ENCODE measurements at regions of chr6 and their contacts with region 1.

Region 1: GRCh38 chr6:143575440-143575839 is 63.9 kb upstream of the FUCA2 start:
- DNase-seq: peak; percentile 12 to 81 (median 46)
- ATAC-seq: peak; percentile 99
- H3K4me3 ChIP-seq: no peak overlapping the region
- H3K4me3 Mint-ChIP-seq: no peak overlapping the region
- H3K27ac ChIP-seq: no peak overlapping the region
- H3K27ac Mint-ChIP-seq: no peak overlapping the region
- H3K4me1 ChIP-seq: no peaks in the 10 kb centered on the region
- H3K4me1 Mint-ChIP-seq: no peaks in the 10 kb centered on the region
- H3K27me3 ChIP-seq: no peaks in the 10 kb centered on the region
- H3K27me3 Mint-ChIP-seq: no peaks in the 10 kb centered on the region
- CTCF ChIP-seq: peak; percentile 93

Region 2: DNA sequence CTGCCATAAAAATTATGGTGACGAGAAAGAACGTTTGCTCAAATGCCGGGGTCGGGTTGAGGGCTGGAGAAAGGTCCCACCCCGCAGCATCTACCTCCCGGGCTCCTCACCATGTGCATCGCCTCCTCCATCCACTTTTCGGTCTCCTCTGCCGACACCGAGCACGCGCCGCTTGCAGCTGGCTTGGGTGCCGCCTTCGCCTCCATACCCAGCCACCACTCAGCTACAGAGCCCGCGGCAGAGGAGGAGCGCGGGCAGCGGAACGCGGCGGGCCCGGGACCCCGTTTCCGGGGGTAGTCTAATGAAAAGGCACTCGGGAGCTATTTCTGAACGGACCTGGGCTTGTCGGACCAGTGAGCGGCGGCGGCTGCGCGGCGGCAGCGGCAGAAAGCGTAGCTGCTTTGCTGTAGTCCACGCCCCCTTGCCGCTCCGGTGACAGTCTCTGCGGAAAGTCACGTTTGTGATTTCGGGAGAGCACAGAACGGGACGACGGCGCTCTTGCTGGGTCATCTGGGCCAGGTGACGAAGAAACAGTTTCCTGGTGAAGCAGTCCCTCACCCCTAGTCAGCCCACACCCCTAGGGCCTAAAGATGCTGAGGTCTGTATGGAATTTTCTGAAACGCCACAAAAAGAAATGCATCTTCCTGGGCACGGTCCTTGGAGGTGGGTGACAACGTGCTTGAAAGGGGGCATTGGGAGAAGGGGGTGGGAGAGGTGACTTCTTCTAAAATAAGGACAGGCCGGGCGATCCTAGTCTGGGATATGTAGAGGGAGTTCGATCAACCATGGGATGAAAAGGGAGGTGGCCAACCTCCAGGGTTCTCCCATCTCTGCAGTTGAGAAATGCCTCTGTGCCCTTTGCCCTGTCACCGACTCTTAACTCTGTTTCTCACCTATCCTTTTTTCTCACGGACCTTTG is 124.7 kb before region 1 on chr6 and contains the starts of genes ADAT2 and PEX3:
- CTCF ChIA-PET with region 1: no interaction called
- POLR2A ChIA-PET with region 1: no interaction called
- intact Hi-C with region 1: no loop called
- DNase-seq: peak; percentile 82 to 95 (median 92)
- ATAC-seq: peak; percentile 90
- H3K4me3 ChIP-seq: peak within 1 kb of the TSS; percentile 64 to 86
- H3K4me3 Mint-ChIP-seq: peak within 1 kb of the TSS; percentile 100
- H3K27ac ChIP-seq: peak within 1 kb of the TSS; percentile 68 to 74
- H3K27ac Mint-ChIP-seq: peak within 1 kb of the TSS; percentile 96
- H3K4me1 ChIP-seq: peaks cover 21% of the 10 kb centered on the region
- H3K4me1 Mint-ChIP-seq: peaks cover 57% of the 10 kb centered on the region
- H3K27me3 ChIP-seq: no peaks in the 10 kb centered on the region
- H3K27me3 Mint-ChIP-seq: no peaks in the 10 kb centered on the region
- CTCF ChIP-seq: no peak
- total RNA-seq, gene ADAT2: 18.8 to 19.9 TPM
- total RNA-seq, gene PEX3: 10.5 to 11.6 TPM

Region 3: GRCh38 chr6:143559051-143559660 is 16.3 kb before region 1 on chr6:
- CTCF ChIA-PET with region 1: interaction called, 10 read pairs
- POLR2A ChIA-PET with region 1: no interaction called
- intact Hi-C with region 1: no loop called
- DNase-seq: no peak
- ATAC-seq: no peak
- H3K4me3 ChIP-seq: no peak overlapping the region
- H3K4me3 Mint-ChIP-seq: no peak overlapping the region
- H3K27ac ChIP-seq: no peak overlapping the region
- H3K27ac Mint-ChIP-seq: no peak overlapping the region
- H3K4me1 ChIP-seq: peaks cover 12% of the 10 kb centered on the region
- H3K4me1 Mint-ChIP-seq: peaks cover 42% of the 10 kb centered on the region
- H3K27me3 ChIP-seq: no peaks in the 10 kb centered on the region
- H3K27me3 Mint-ChIP-seq: no peaks in the 10 kb centered on the region
- CTCF ChIP-seq: no peak

Region 4: DNA sequence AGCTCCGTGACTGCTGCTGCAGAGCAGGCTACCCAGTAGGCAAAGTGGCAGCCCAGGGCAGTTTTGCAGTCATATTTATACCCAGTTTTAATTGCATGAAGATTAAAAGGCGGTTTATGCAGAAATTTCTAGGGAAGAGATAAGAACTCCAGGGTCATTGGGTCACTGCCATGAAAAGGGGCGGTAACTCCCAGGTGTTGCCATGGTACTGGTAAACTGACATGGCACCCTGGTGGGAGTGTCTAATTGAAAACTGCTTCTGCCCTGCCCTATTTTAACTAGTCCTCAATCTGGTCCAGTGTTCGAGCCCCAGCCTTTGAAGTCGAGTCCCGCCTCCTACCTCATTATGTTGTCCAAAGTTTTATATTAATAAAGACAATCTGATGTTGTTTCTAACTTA is 11.1 kb after region 1 on chr6:
- CTCF ChIA-PET with region 1: interaction called, 15 read pairs
- POLR2A ChIA-PET with region 1: interaction called, 4 read pairs
- intact Hi-C with region 1: no loop called
- DNase-seq: no peak
- ATAC-seq: no peak
- H3K4me3 ChIP-seq: no peak overlapping the region
- H3K4me3 Mint-ChIP-seq: no peak overlapping the region
- H3K27ac ChIP-seq: no peak overlapping the region
- H3K27ac Mint-ChIP-seq: no peak overlapping the region
- H3K4me1 ChIP-seq: no peaks in the 10 kb centered on the region
- H3K4me1 Mint-ChIP-seq: peaks cover 4% of the 10 kb centered on the region
- H3K27me3 ChIP-seq: no peaks in the 10 kb centered on the region
- H3K27me3 Mint-ChIP-seq: no peaks in the 10 kb centered on the region
- CTCF ChIP-seq: no peak

Region 5: DNA sequence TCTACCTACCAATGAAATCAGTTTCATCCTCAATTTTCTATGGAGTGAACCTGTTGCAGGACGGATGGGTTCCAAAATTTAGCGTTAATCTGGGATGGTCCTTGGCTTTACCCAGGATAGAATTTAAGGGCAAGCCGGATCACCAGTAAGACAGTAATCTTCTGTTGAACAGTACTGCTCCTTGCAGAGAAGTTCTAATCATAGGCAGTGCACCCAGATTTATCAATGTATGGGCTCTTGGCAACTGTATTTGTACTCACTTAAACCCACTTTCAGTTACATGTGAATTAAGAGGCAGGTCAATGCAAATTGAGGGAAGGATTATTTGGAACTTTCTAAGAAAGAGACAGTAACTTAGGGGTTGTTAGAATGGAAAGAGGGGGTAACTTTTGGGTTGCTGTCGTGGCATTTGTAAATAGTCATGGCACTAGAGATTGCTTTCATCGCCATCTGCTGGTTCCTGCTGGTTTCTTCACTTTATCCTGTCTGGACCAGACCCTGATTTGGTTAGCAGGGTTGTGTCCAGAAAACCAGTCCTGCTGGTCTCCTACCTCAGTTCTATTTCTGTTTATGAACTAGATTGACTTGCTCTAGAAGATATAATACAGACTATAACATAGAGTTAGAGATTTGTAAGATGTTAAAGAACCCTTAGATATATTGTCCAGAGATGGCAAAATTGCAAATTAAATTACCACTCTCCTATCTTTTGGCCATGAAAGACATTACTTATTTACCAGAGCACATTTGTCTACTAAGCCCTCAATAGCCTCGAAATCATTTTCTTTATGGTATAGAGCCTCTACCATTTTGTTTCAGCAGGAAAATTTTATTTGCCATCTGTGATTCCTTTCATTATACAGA is 1356.0 kb after region 1 on chr6:
- CTCF ChIA-PET with region 1: no interaction called
- POLR2A ChIA-PET with region 1: no interaction called
- intact Hi-C with region 1: loop called in 1 of 2 experiments (anchors 10 kb)
- DNase-seq: peak in 4 of 9 experiments; percentile 16 to 49 (median 28)
- ATAC-seq: no peak
- H3K4me3 ChIP-seq: no peak overlapping the region
- H3K4me3 Mint-ChIP-seq: no peak overlapping the region
- H3K27ac ChIP-seq: no peak overlapping the region
- H3K27ac Mint-ChIP-seq: no peak overlapping the region
- H3K4me1 ChIP-seq: no peaks in the 10 kb centered on the region
- H3K4me1 Mint-ChIP-seq: no peaks in the 10 kb centered on the region
- H3K27me3 ChIP-seq: no peaks in the 10 kb centered on the region
- H3K27me3 Mint-ChIP-seq: no peaks in the 10 kb centered on the region
- CTCF ChIP-seq: peak; percentile 57

Region 6: GRCh38 chr6:145214570-145214969 is 1639.1 kb after region 1 on chr6:
- CTCF ChIA-PET with region 1: no interaction called
- POLR2A ChIA-PET with region 1: no interaction called
- intact Hi-C with region 1: loop called in 1 of 2 experiments (anchors 10 kb)
- DNase-seq: peak in 2 of 9 experiments; percentile 17 to 38
- ATAC-seq: no peak
- H3K4me3 ChIP-seq: no peak overlapping the region
- H3K4me3 Mint-ChIP-seq: no peak overlapping the region
- H3K27ac ChIP-seq: no peak overlapping the region
- H3K27ac Mint-ChIP-seq: no peak overlapping the region
- H3K4me1 ChIP-seq: no peaks in the 10 kb centered on the region
- H3K4me1 Mint-ChIP-seq: peaks cover 3% of the 10 kb centered on the region
- H3K27me3 ChIP-seq: no peaks in the 10 kb centered on the region
- H3K27me3 Mint-ChIP-seq: peaks cover 9% of the 10 kb centered on the region
- CTCF ChIP-seq: peak; percentile 56